OCI-LY7 (cell line): ENCODE measurements at regions of chr7 and their contacts with region 1.

Region 1: GRCh38 chr7:95871078-95871782 is 98.9 kb downstream of the DYNC1I1 start:
- DNase-seq: peak; percentile 44
- H3K4me3 ChIP-seq: no peak overlapping the region
- H3K27ac ChIP-seq: no peak overlapping the region
- H3K4me1 ChIP-seq: no peaks in the 10 kb centered on the region
- CTCF ChIP-seq: peak; percentile 81

Region 2: GRCh38 chr7:95527033-95527775 is 344.0 kb before region 1 on chr7:
- CTCF ChIA-PET with region 1: no interaction called
- POLR2A ChIA-PET with region 1: no interaction called
- intact Hi-C with region 1: loop called (anchors 5 kb)
- DNase-seq: peak; percentile 49
- H3K4me3 ChIP-seq: no peak overlapping the region
- H3K27ac ChIP-seq: no peak overlapping the region
- H3K4me1 ChIP-seq: no peaks in the 10 kb centered on the region
- CTCF ChIP-seq: peak; percentile 90

Region 3: GRCh38 chr7:95723592-95724180 is 147.5 kb before region 1 on chr7:
- CTCF ChIA-PET with region 1: no interaction called
- POLR2A ChIA-PET with region 1: no interaction called
- intact Hi-C with region 1: loop called (anchors 5 kb)
- DNase-seq: peak; percentile 5
- H3K4me3 ChIP-seq: no peak overlapping the region
- H3K27ac ChIP-seq: no peak overlapping the region
- H3K4me1 ChIP-seq: no peaks in the 10 kb centered on the region
- CTCF ChIP-seq: peak; percentile 47

Region 4: DNA sequence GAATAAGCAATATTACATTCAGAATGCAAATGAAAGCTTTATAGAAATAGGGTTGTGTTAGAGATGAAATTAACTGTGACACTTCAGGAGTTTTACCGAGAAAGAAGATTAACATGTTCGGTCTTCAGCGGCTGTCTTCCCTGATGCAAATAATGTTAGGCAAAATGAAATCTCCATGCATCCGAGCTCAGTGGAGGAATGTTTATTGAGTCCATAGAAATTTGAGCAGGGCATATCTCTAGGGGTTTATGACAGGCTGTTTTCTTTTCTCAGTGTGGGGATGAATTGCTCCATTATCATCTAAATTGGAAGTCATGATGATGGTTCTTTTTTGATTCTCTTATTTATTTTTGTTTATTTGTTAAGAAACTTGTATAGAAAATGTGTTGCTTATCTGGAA is 67.2 kb before region 1 on chr7:
- CTCF ChIA-PET with region 1: no interaction called
- POLR2A ChIA-PET with region 1: no interaction called
- intact Hi-C with region 1: no loop called
- DNase-seq: no peak
- H3K4me3 ChIP-seq: no peak overlapping the region
- H3K27ac ChIP-seq: no peak overlapping the region
- H3K4me1 ChIP-seq: no peaks in the 10 kb centered on the region
- CTCF ChIP-seq: no peak